Upper lobe of right lung (tissue), 1 donor: ENCODE measurements at regions of chr1 and their contacts with region 1.

Region 1: DNA sequence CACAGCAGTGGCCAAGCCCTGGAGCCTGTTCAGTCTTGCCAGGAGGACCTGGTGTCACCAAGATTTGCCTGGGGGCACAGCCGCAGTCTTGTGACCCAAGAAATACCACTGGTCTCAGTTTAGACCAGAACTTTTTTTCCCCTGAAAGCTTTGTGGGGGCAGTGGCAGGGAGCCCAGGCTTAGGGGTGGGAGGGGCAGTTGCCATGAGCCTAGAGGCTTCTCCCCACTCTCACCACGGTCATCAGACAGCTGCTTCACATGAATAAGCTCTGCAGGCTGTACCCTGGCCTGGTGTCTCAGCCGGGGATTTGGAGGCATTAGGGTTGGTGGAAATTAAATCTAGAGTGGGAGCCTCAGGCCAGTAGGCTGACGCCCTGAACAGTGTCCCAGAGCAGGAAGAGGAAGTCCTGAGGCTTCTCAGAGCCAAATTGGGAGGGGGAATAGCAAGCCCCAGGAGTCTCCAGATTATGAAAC is 73.7 kb downstream of the SLC16A1 start:
- DNase-seq: no peak
- ATAC-seq: peak; percentile 49
- H3K4me3 ChIP-seq: no peak overlapping the region
- H3K27ac ChIP-seq: peak overlapping the region; percentile 51
- H3K4me1 ChIP-seq: peaks cover 11% of the 10 kb centered on the region
- H3K27me3 ChIP-seq: no peaks in the 10 kb centered on the region
- CTCF ChIP-seq: no peak

Region 2: DNA sequence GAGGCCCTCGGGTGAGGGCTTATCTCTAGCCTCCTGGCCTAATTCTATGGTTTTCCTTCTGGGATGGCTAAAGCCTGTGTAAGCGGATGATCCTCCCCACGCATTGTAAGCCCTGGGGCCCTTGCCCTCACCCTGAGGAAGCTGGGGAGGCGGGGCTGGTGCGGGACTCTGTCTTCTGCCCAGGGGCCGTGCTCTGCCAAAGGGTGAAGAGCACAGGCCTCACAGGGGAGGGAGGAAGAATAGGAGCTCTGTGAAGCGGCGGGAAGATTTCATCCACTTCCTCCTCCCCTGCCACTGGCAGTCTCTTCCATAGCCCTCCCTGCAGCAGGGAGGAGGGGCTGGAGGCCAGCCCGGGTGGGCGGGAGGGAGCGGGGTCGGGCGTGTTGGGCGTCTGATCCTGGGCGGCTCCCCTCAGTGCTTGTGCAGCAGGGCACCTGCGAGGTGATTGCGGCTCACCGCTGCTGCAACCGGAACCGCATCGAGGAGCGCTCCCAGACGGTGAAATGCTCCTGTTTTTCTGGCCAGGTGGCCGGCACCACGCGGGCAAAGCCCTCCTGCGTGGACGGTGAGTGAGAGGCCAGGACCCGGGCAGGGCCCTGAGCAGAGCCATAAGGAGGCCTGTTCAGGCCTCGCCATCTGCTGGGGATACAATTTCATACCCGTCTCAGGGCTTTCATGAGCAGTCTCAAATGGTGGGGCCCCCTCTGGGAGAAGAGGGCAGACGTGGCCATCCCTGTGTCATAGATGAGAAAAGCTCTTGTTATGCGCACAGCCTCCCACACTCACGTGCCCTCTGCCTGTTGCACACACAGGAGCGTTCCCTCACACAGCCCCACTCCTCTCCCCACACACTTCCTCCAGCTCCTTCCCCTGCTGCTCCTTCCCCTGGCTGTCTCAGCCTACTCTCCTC is 159.5 kb before region 1 on chr1:
- intact Hi-C with region 1: loop called (anchors 10 kb)
- DNase-seq: no peak
- ATAC-seq: peak; percentile 65
- H3K4me3 ChIP-seq: peak overlapping the region; percentile 21
- H3K27ac ChIP-seq: no peak overlapping the region
- H3K4me1 ChIP-seq: peaks cover 5% of the 10 kb centered on the region
- H3K27me3 ChIP-seq: no peaks in the 10 kb centered on the region
- CTCF ChIP-seq: no peak

Region 3: GRCh38 chr1:112762541-112763517 is 119.5 kb before region 1 on chr1:
- intact Hi-C with region 1: no loop called
- DNase-seq: peak; percentile 71
- ATAC-seq: peak; percentile 83
- H3K4me3 ChIP-seq: no peak overlapping the region
- H3K27ac ChIP-seq: no peak overlapping the region
- H3K4me1 ChIP-seq: peaks cover 6% of the 10 kb centered on the region
- H3K27me3 ChIP-seq: no peaks in the 10 kb centered on the region
- CTCF ChIP-seq: no peak

Region 4: DNA sequence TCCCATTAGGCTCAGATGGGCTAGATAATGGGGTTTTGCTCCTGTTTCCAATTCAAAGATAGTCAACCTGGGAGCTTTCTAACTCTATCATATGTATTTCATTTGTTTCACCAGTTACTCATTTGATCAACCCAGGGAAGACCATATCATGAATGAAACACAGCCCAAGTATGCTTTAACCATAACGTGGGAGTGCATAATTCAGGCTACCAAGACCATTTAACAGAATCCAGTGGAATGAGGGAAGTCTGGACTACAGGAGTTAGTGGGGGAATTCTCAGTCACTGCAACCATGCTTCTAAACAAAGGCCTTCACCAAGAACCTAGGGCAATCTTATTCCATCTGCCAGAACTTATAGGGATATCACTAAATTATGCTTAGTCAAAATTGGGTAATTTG is 88.7 kb after region 1 on chr1:
- intact Hi-C with region 1: no loop called
- DNase-seq: no peak
- ATAC-seq: no peak
- H3K4me3 ChIP-seq: no peak overlapping the region
- H3K27ac ChIP-seq: no peak overlapping the region
- H3K4me1 ChIP-seq: no peaks in the 10 kb centered on the region
- H3K27me3 ChIP-seq: no peaks in the 10 kb centered on the region
- CTCF ChIP-seq: no peak

Region 5: DNA sequence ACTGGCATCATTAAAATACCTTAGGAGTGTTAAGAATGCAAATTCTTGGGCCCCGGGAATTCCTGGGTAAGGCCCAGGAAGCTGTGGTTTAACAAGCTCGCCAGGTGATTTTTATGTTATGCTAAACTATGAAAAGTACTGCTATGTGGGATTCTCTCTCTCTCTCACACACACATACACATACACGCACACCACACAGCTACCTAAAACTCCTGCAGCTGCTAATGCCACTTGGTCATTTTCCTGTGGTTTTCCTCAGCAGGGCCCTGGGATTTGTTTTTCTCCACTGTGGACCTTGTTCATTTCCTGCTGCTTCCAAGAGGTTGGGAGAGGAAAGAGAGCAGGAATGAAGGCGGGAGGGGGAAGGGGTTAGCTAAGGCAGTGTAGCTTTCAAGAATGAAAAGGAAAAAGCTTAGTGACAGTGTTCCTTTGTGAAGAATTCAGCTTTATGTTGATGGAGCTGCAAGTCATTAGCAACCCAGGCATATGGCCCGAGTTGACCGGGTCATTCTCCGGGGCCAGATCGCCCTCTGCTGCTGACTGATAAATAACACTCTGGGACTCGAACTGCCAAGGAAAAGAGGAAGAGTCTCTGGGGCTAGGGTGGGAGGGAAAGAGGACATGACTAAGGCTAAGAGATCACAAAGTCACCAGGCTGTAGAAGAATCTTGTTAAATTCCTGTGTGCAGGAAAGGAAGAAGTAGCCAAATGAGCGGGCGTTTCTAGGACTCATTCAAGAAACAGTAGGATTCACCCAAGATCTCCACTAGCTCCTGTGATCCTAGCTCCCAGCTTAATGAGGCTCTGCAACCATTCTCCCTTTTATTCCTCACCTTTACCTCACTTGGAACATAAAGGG is 160.2 kb after region 1 on chr1:
- intact Hi-C with region 1: loop called (anchors 5 kb)
- DNase-seq: peak; percentile 80
- ATAC-seq: peak; percentile 98
- H3K4me3 ChIP-seq: no peak overlapping the region
- H3K27ac ChIP-seq: no peak overlapping the region
- H3K4me1 ChIP-seq: peaks cover 4% of the 10 kb centered on the region
- H3K27me3 ChIP-seq: no peaks in the 10 kb centered on the region
- CTCF ChIP-seq: peak; percentile 55

Region 6: GRCh38 chr1:113291777-113292602 is 409.7 kb after region 1 on chr1:
- intact Hi-C with region 1: no loop called
- DNase-seq: no peak
- ATAC-seq: no peak
- H3K4me3 ChIP-seq: no peak overlapping the region
- H3K27ac ChIP-seq: no peak overlapping the region
- H3K4me1 ChIP-seq: no peaks in the 10 kb centered on the region
- H3K27me3 ChIP-seq: no peaks in the 10 kb centered on the region
- CTCF ChIP-seq: no peak